Natural killer cell (primary cell): ENCODE measurements at regions of chr9 and their contacts with region 1.

Region 1: GRCh38 chr9:68492806-68493205 is 47.9 kb downstream of the TMEM252 start:
- DNase-seq: no peak
- ATAC-seq: no peak
- H3K4me3 ChIP-seq: no peak overlapping the region
- H3K4me3 Mint-ChIP-seq: no peak overlapping the region
- H3K27ac ChIP-seq: no peak overlapping the region
- H3K27ac Mint-ChIP-seq: no peak overlapping the region
- H3K4me1 ChIP-seq: no peaks in the 10 kb centered on the region
- H3K4me1 Mint-ChIP-seq: no peaks in the 10 kb centered on the region
- H3K27me3 ChIP-seq: no peaks in the 10 kb centered on the region
- H3K27me3 Mint-ChIP-seq: peaks cover 7 to 29% of the 10 kb centered on the region in 2 donors
- CTCF ChIP-seq: no peak

Region 2: GRCh38 chr9:68437785-68438184 is 55.0 kb before region 1 on chr9:
- intact Hi-C with region 1: no loop called
- DNase-seq: no peak
- ATAC-seq: no peak
- H3K4me3 ChIP-seq: no peak overlapping the region
- H3K4me3 Mint-ChIP-seq: no peak overlapping the region
- H3K27ac ChIP-seq: no peak overlapping the region
- H3K27ac Mint-ChIP-seq: no peak overlapping the region
- H3K4me1 ChIP-seq: no peaks in the 10 kb centered on the region
- H3K4me1 Mint-ChIP-seq: peaks cover 0 to 4% of the 10 kb centered on the region in 2 donors
- H3K27me3 ChIP-seq: no peaks in the 10 kb centered on the region
- H3K27me3 Mint-ChIP-seq: peaks cover 0 to 5% of the 10 kb centered on the region in 2 donors
- CTCF ChIP-seq: no peak

Region 3: DNA sequence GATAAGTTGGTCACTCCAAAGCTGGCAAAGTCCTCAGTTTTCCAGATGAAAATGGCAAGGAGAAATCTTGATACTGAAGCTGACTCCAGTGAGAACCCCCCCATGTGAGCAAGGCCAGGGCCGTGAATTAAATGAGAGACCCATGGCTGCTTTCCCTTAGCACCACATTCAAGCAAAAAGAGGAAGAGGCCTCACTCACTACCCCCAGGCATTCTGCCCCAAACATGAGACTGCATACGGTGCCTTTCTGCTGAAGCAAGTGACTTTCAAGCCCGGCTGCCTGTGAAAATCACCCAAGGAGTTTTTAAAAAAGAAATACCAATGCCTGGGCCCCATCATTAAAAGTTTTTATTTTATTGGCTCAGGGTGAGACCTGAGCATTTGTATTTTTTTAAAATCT is 19.0 kb before region 1 on chr9:
- intact Hi-C with region 1: no loop called
- DNase-seq: no peak
- ATAC-seq: no peak
- H3K4me3 ChIP-seq: no peak overlapping the region
- H3K4me3 Mint-ChIP-seq: no peak overlapping the region
- H3K27ac ChIP-seq: no peak overlapping the region
- H3K27ac Mint-ChIP-seq: no peak overlapping the region
- H3K4me1 ChIP-seq: no peaks in the 10 kb centered on the region
- H3K4me1 Mint-ChIP-seq: no peaks in the 10 kb centered on the region
- H3K27me3 ChIP-seq: no peaks in the 10 kb centered on the region
- H3K27me3 Mint-ChIP-seq: peaks cover 9 to 31% of the 10 kb centered on the region in 2 donors
- CTCF ChIP-seq: no peak

Region 4: GRCh38 chr9:68507130-68507805 is 14.5 kb after region 1 on chr9:
- intact Hi-C with region 1: loop called (anchors 1 kb)
- DNase-seq: peak in 1 of 2 donors; percentile 13
- ATAC-seq: no peak
- H3K4me3 ChIP-seq: no peak overlapping the region
- H3K4me3 Mint-ChIP-seq: no peak overlapping the region
- H3K27ac ChIP-seq: no peak overlapping the region
- H3K27ac Mint-ChIP-seq: no peak overlapping the region
- H3K4me1 ChIP-seq: no peaks in the 10 kb centered on the region
- H3K4me1 Mint-ChIP-seq: no peaks in the 10 kb centered on the region
- H3K27me3 ChIP-seq: no peaks in the 10 kb centered on the region
- H3K27me3 Mint-ChIP-seq: peaks cover 0 to 2% of the 10 kb centered on the region in 2 donors
- CTCF ChIP-seq: peak; percentile 16

Region 5: DNA sequence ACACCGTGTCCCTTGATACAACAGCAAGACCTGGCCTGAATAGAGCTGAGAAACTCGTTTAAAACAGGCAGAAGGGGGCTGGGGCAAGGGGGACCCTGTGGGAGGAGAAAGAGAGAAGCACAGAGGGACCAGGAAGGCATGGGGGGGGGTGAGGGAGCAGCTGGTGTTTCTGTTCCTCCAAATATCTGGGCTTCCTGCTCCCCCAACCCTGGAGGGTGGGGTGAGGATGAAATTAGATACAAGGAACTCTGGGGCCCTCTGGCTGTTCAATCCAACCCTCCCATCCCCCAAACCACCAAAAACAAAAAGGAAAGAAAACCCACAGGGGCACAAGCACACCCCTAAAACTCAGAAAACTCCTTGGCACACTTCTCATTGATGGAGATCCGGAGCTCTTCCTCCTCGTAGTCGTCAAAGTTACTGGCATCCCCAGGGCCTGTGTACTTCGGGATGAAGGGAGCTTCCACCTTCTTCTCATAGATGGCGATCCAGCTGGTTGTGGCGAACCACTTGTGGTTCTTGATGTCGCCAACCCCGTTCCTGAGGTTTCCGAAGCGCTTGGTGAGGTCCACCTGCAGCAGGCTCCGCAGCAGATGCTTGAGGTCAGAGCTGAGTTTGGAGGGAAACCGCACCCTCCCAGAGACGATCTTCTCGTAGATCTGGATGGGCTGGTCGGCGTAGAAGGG is 520.0 kb after region 1 on chr9:
- intact Hi-C with region 1: no loop called
- DNase-seq: no peak
- ATAC-seq: peak in 1 of 3 donors; percentile 15
- H3K4me3 ChIP-seq: no peak overlapping the region
- H3K4me3 Mint-ChIP-seq: no peak overlapping the region
- H3K27ac ChIP-seq: no peak overlapping the region
- H3K27ac Mint-ChIP-seq: no peak overlapping the region
- H3K4me1 ChIP-seq: peaks cover 11% of the 10 kb centered on the region
- H3K4me1 Mint-ChIP-seq: peaks cover 6 to 14% of the 10 kb centered on the region in 2 donors
- H3K27me3 ChIP-seq: no peaks in the 10 kb centered on the region
- H3K27me3 Mint-ChIP-seq: peaks cover 0 to 23% of the 10 kb centered on the region in 2 donors
- CTCF ChIP-seq: no peak